ENCODE measurements at regions of chr1 and their contacts with region 1.

Region 1: DNA sequence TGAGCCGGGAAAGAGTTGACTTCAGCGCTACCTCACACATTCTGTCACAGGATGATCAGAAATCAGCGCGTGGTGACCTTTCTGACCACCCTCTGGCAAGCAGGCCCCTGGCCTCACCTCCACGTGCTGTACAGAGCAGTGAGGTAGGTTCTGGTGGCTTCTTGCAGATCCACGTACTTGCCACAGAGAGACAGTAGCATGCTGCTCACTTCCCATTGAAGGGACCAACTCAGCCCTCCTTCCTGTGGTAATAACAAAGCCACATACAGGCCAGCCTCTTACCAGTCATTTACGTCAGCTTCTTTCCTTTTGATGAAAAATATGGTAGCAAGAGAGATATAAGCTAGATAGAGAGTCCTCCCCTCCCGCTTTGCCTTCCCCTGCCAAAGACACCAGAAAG is 200.7 kb downstream of the CHRM3 start:
- DNase-seq: peak; percentile 37
- H3K4me3 Mint-ChIP-seq: no peak overlapping the region
- H3K27ac Mint-ChIP-seq: no peak overlapping the region
- H3K4me1 Mint-ChIP-seq: peaks cover 7% of the 10 kb centered on the region
- H3K27me3 Mint-ChIP-seq: peaks cover 9% of the 10 kb centered on the region

Region 2: GRCh38 chr1:239516579-239516978 is 70.5 kb before region 1 on chr1:
- CTCF ChIA-PET with region 1: no interaction called
- POLR2A ChIA-PET with region 1: no interaction called
- intact Hi-C with region 1: no loop called
- DNase-seq: no peak
- H3K4me3 Mint-ChIP-seq: no peak overlapping the region
- H3K27ac Mint-ChIP-seq: no peak overlapping the region
- H3K4me1 Mint-ChIP-seq: no peaks in the 10 kb centered on the region
- H3K27me3 Mint-ChIP-seq: no peaks in the 10 kb centered on the region

Region 3: DNA sequence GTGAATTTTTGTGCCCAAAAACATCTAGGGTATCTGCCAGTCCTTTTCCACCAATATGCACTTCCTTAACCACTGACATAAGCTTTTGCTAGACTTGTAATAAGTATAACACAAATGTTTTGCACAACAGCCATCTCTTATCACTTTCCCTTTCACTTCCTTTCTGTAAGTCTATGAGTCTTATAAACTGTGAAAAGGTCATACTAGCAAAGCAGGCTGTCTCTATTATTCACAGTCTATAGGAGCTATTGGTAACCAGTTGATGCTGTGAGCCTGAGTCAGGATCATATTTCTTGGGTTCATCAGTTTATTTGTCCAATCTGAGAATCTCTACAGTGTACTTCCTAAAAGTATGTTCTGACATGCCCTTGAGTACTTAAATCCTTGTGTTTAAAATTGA is 28.1 kb before region 1 on chr1:
- CTCF ChIA-PET with region 1: no interaction called
- POLR2A ChIA-PET with region 1: no interaction called
- intact Hi-C with region 1: no loop called
- DNase-seq: no peak
- H3K4me3 Mint-ChIP-seq: no peak overlapping the region
- H3K27ac Mint-ChIP-seq: no peak overlapping the region
- H3K4me1 Mint-ChIP-seq: peaks cover 8% of the 10 kb centered on the region
- H3K27me3 Mint-ChIP-seq: no peaks in the 10 kb centered on the region

Region 4: GRCh38 chr1:239617259-239617658 is 30.2 kb after region 1 on chr1:
- CTCF ChIA-PET with region 1: no interaction called
- POLR2A ChIA-PET with region 1: no interaction called
- intact Hi-C with region 1: no loop called
- DNase-seq: no peak
- H3K4me3 Mint-ChIP-seq: no peak overlapping the region
- H3K27ac Mint-ChIP-seq: no peak overlapping the region
- H3K4me1 Mint-ChIP-seq: no peaks in the 10 kb centered on the region
- H3K27me3 Mint-ChIP-seq: no peaks in the 10 kb centered on the region

Region 5: DNA sequence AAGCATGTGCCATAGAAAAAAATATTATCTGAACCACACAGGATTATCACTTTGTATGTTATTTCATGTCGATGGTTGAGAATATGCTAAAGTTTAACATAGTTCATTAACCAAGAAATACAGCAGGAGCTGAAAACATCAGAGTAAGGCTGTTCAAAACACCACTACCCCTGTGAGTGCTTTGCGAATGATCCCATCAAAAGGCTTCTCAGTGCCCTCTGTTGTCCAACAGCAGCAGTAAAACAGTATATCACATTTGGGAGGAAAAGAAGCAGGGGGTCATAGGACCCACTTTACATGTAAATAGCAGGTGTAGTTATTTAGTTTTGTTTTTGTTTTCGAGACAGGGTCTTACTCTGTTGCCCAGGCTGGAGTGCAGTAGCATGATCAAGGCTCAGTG is 215.2 kb after region 1 on chr1:
- CTCF ChIA-PET with region 1: no interaction called
- POLR2A ChIA-PET with region 1: no interaction called
- intact Hi-C with region 1: loop called (anchors 1 kb)
- DNase-seq: no peak
- H3K4me3 Mint-ChIP-seq: no peak overlapping the region
- H3K27ac Mint-ChIP-seq: no peak overlapping the region
- H3K4me1 Mint-ChIP-seq: peaks cover 4% of the 10 kb centered on the region
- H3K27me3 Mint-ChIP-seq: no peaks in the 10 kb centered on the region

Region 6: DNA sequence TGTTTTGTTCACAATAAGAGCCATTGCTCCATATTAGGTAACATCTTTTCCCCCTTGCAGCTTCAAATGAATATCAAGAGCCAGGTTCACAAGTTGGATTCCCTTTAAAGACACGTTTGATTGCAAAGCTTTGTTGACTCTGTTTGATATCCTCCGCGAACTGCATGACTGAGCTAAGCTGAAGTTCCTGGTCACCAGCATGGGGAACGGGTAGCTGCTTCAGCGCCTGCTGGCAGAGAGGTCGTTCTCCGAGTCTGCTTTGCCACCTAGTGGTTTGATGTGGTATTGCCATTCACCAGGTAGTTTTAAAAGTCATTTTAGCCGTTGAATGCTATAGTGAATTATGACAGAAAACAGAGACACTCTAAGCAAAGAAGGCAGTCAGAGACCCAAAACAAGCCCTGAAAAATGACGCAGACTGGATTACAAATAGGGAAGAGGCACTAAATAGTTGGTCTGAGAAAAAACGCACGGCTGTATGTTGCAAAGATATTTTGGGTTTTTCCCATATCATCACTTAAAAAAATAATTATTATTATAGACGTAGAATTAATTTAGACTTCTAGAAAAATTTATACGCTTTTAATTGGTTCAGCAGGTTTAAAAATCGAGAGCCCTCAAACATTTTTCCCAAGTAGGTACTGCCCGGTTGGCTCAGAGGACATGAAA is 311.1 kb after region 1 on chr1:
- CTCF ChIA-PET with region 1: interaction called, 5 read pairs
- POLR2A ChIA-PET with region 1: no interaction called
- intact Hi-C with region 1: loop called (anchors 2 kb)
- DNase-seq: peak; percentile 81
- H3K4me3 Mint-ChIP-seq: no peak overlapping the region
- H3K27ac Mint-ChIP-seq: no peak overlapping the region
- H3K4me1 Mint-ChIP-seq: peaks cover 2% of the 10 kb centered on the region
- H3K27me3 Mint-ChIP-seq: peaks cover 6% of the 10 kb centered on the region